ENCODE measurements at regions of chr18 and their contacts with region 1.

Region 1: GRCh38 chr18:13375302-13376255 is 157.0 kb downstream of the LDLRAD4 start:
- DNase-seq: peak; percentile 94
- H3K4me3 Mint-ChIP-seq: peak overlapping the region; percentile 74
- H3K27ac Mint-ChIP-seq: peak overlapping the region; percentile 93
- H3K4me1 Mint-ChIP-seq: peaks cover 69% of the 10 kb centered on the region
- H3K27me3 Mint-ChIP-seq: no peaks in the 10 kb centered on the region

Region 2: DNA sequence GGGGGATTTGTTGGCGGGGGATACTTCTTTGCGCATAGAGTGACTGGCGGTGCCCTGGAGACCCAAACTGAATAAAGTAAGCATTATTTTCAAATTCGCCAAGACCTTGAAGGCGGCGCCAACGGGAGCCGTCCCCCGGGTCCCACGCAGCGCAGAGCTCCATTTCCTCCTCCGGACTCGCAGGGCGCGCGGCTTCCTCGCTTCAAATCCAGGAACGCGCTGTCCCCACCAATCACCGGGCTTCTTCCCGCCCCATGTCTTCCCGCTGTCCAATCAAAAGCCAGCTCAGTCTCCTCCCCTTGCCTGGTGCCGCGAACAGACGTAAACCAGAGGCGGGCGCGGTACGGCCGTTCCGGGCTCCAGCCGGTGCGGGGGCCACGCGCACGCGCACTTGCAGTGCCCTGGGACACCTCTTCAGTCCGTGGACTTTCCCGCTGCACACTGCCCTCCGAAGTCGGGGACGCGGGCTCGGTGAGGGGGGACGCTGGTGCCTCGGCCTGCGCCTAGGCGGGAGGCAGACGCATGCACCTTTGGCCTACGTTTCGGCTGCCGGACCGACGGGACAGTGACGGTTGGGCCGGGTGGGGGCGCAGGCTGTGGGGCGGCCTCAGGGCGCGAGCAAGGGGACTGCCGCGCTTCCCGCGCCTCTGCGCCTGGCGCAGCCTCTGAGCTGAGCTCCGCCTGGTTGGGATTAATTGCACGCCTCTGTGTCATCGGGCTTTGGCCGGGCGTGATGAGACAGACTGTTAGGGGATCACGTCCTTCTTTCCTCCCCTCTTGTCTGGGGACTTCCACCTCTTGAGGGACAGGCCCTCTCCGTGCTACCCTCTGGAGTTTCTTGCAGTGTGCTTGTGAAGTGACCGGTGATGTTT is 384.4 kb before region 1 on chr18 and contains the start of gene CEP192:
- intact Hi-C with region 1: loop called (anchors 2 kb)
- DNase-seq: peak; percentile 99
- H3K4me3 Mint-ChIP-seq: peak within 1 kb of the TSS; percentile 94
- H3K27ac Mint-ChIP-seq: peak within 1 kb of the TSS; percentile 92
- H3K4me1 Mint-ChIP-seq: peaks cover 16% of the 10 kb centered on the region
- H3K27me3 Mint-ChIP-seq: no peaks in the 10 kb centered on the region
- total RNA-seq, gene CEP192: 31.4 and 34.7 TPM in 2 replicates

Region 3: GRCh38 chr18:13026583-13027270 is 348.9 kb before region 1 on chr18:
- intact Hi-C with region 1: no loop called
- DNase-seq: peak; percentile 27
- H3K4me3 Mint-ChIP-seq: no peak overlapping the region
- H3K27ac Mint-ChIP-seq: no peak overlapping the region
- H3K4me1 Mint-ChIP-seq: peaks cover 18% of the 10 kb centered on the region
- H3K27me3 Mint-ChIP-seq: no peaks in the 10 kb centered on the region

Region 4: GRCh38 chr18:13245481-13246000 is 130.0 kb before region 1 on chr18:
- intact Hi-C with region 1: no loop called
- DNase-seq: no peak
- H3K4me3 Mint-ChIP-seq: no peak overlapping the region
- H3K27ac Mint-ChIP-seq: no peak overlapping the region
- H3K4me1 Mint-ChIP-seq: no peaks in the 10 kb centered on the region
- H3K27me3 Mint-ChIP-seq: no peaks in the 10 kb centered on the region

Region 5: GRCh38 chr18:13425462-13426133 is 50.0 kb after region 1 on chr18:
- intact Hi-C with region 1: no loop called
- DNase-seq: peak; percentile 67
- H3K4me3 Mint-ChIP-seq: peak overlapping the region; percentile 14
- H3K27ac Mint-ChIP-seq: peak overlapping the region; percentile 13
- H3K4me1 Mint-ChIP-seq: peaks cover 47% of the 10 kb centered on the region
- H3K27me3 Mint-ChIP-seq: no peaks in the 10 kb centered on the region

Region 6: GRCh38 chr18:13435596-13436327 is 60.2 kb after region 1 on chr18:
- intact Hi-C with region 1: loop called (anchors 1 kb)
- DNase-seq: no peak
- H3K4me3 Mint-ChIP-seq: no peak overlapping the region
- H3K27ac Mint-ChIP-seq: peak overlapping the region; percentile 4
- H3K4me1 Mint-ChIP-seq: peaks cover 58% of the 10 kb centered on the region
- H3K27me3 Mint-ChIP-seq: no peaks in the 10 kb centered on the region

Region 7: DNA sequence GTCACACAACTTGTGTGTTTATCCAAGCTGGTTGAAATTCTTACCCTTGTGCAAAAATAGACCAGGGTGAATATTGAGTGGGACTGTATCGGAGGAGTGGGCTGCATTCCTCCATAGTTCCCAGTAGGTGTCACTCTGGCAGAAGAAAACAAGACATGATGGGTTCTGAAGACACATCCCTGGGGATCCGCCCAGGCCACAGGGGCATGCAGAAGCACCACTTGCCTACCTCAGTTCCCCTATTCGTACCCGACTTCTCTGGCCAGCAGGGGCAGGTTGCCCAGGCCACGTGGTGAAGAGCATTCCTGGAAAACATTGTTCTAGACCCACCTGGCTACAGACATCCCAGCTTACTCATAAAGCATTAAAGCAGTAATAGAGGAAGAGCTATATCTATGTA is 182.5 kb after region 1 on chr18:
- intact Hi-C with region 1: loop called (anchors 1 kb)
- DNase-seq: peak; percentile 77
- H3K4me3 Mint-ChIP-seq: no peak overlapping the region
- H3K27ac Mint-ChIP-seq: peak overlapping the region; percentile 48
- H3K4me1 Mint-ChIP-seq: peaks cover 29% of the 10 kb centered on the region
- H3K27me3 Mint-ChIP-seq: no peaks in the 10 kb centered on the region

Region 8: GRCh38 chr18:13611601-13612195 is 236.1 kb after region 1 on chr18:
- intact Hi-C with region 1: loop called (anchors 2 kb)
- DNase-seq: no peak
- H3K4me3 Mint-ChIP-seq: peak overlapping the region; percentile 94
- H3K27ac Mint-ChIP-seq: peak overlapping the region; percentile 97
- H3K4me1 Mint-ChIP-seq: peaks cover 72% of the 10 kb centered on the region
- H3K27me3 Mint-ChIP-seq: no peaks in the 10 kb centered on the region